Activated CD4-positive, alpha-beta T cell treated with anti-CD3 and anti-CD28 coated beads for 36 hours (primary cell): ENCODE measurements at regions of chr9 and their contacts with region 1.

Region 1: DNA sequence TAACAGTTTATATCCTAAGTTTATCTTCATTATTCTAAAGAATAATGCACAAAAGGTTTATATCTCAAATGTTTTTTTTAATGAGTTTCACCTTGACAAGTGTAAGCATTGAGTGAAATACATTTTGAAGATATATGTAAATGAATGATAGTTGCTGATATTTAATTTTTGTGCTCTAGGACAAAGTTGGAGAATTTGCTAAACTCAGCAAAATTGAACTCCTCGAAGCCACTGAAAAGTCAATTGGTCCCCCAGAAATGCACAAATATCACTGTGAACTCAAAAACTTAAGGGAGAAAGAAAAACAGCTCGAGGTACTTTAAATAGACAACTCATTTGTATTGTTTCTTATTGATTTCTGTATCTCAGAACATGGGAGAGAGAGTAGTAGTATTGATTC is 19.5 kb downstream of the SMC5 start:
- DNase-seq: no peak
- ATAC-seq: no peak
- H3K4me3 Mint-ChIP-seq: no peak overlapping the region
- H3K27ac Mint-ChIP-seq: no peak overlapping the region
- H3K4me1 Mint-ChIP-seq: peaks cover 18% of the 10 kb centered on the region
- H3K27me3 Mint-ChIP-seq: no peaks in the 10 kb centered on the region

Region 2: GRCh38 chr9:70085241-70085640 is 193.1 kb before region 1 on chr9:
- CTCF ChIA-PET with region 1: no interaction called
- POLR2A ChIA-PET with region 1: no interaction called
- intact Hi-C with region 1: no loop called
- DNase-seq: no peak
- ATAC-seq: no peak
- H3K4me3 Mint-ChIP-seq: no peak overlapping the region
- H3K27ac Mint-ChIP-seq: no peak overlapping the region
- H3K4me1 Mint-ChIP-seq: no peaks in the 10 kb centered on the region
- H3K27me3 Mint-ChIP-seq: peaks cover 13% of the 10 kb centered on the region

Region 3: DNA sequence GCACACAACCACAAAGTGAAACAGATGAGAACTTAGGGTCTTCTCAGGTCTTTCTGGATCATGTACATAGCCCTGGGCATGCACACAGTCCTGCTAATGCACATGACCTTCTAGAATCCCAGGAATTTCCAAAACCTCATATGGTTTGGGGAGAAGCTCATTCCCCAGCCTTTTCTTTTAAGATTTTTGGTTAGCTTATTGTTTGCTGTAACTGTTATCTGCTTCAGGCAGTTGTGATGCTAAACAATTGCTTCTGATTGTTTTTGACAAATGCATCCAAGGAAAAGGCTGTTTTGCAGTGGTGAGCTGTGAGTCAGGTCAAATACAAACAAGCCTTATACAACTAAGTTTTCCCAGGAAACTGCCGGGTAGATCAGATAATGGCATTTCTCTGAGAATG is 13.1 kb after region 1 on chr9:
- CTCF ChIA-PET with region 1: no interaction called
- POLR2A ChIA-PET with region 1: no interaction called
- intact Hi-C with region 1: loop called in 1 of 2 experiments (anchors 1 kb)
- DNase-seq: no peak
- ATAC-seq: no peak
- H3K4me3 Mint-ChIP-seq: no peak overlapping the region
- H3K27ac Mint-ChIP-seq: no peak overlapping the region
- H3K4me1 Mint-ChIP-seq: peaks cover 13% of the 10 kb centered on the region
- H3K27me3 Mint-ChIP-seq: no peaks in the 10 kb centered on the region

Region 4: DNA sequence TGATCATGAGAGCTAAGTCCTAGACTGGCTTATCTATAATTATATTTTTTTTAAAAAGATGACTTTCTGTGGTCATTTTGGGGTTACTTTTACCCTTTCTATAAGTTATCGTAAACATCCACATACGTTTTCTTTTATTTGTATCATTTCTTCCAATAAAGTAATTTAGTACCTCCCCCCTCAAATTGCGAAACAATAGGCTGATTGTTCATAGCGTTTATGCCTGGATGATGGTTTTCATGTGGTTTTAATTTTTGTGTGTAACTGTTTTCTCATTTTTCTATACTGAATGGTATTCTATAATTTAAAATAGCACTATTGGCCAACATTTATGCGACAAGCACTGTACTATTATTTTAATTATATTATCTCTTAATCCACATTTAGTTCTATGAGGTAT is 25.0 kb after region 1 on chr9:
- CTCF ChIA-PET with region 1: interaction called, 3 read pairs
- POLR2A ChIA-PET with region 1: no interaction called
- intact Hi-C with region 1: loop called in 1 of 2 experiments (anchors 2 kb)
- DNase-seq: no peak
- ATAC-seq: no peak
- H3K4me3 Mint-ChIP-seq: no peak overlapping the region
- H3K27ac Mint-ChIP-seq: no peak overlapping the region
- H3K4me1 Mint-ChIP-seq: peaks cover 2% of the 10 kb centered on the region
- H3K27me3 Mint-ChIP-seq: no peaks in the 10 kb centered on the region